Endothelial cell of umbilical vein (primary cell): ENCODE measurements at regions of chr2 and their contacts with region 1.

Region 1: DNA sequence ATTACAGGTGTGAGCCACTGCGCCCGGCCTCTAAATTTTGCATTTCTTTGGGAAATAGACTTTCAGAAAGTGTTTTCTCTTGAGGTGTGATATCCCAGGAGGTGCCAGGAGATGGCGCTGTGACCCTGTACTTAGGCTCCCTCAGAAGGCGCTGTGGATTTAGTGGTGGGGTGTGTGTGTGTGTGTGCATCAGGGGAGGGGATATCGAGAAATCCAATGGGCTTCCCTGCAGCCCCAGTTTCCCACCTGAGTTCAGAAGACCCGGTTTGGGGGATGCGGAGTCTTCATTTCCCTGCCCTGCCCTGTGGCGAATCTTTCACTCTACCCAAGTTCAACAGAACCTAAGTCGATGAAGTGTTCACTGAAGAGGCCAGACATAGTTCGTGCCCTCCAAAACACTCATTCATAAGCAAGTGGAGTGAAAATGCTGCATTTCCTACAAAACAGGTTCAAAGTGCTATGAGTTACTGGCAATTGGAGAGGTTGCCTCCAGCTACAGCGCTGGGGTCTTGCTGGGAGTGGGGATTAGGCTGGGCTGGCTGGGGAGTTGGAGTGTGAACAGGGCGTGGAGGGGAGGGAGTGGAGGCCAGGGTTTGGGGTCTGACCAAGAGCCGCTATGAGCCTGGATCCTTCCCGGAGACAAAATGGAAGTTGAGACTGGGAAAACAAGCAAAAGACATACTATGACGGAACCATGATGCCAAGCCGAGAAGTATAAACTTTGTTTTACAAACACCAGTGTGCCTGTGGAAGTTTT is 6.5 kb upstream of the WNT6 start:
- DNase-seq: peak; percentile 55
- H3K4me3 ChIP-seq: no peak overlapping the region
- H3K27ac ChIP-seq: no peak overlapping the region
- H3K4me1 ChIP-seq: no peaks in the 10 kb centered on the region
- H3K27me3 ChIP-seq: peaks cover 46 to 48% of the 10 kb centered on the region in 2 experiments
- CTCF ChIP-seq: peak; percentile 66 to 82
- POLR2A ChIP-seq: no peak

Region 2: GRCh38 chr2:218671654-218672566 is 181.2 kb before region 1 on chr2 and contains the starts of genes RNF25 and STK36:
- CTCF ChIA-PET with region 1: interaction called, 33 read pairs
- POLR2A ChIA-PET with region 1: no interaction called
- dilution Hi-C with region 1: no loop called
- intact Hi-C with region 1: no loop called
- DNase-seq: peak; percentile 82
- H3K4me3 ChIP-seq: peak within 1 kb of the TSS; percentile 54 to 87 (median 82)
- H3K27ac ChIP-seq: peak within 1 kb of the TSS; percentile 79
- H3K4me1 ChIP-seq: peaks cover 16% of the 10 kb centered on the region
- H3K27me3 ChIP-seq: no peaks in the 10 kb centered on the region
- CTCF ChIP-seq: no peak
- POLR2A ChIP-seq: peak; percentile 86
- total RNA-seq, gene RNF25: 38.2 and 39.1 TPM in 2 replicates
- total RNA-seq, gene STK36: 34.9 and 40.9 TPM in 2 replicates

Region 3: GRCh38 chr2:218701806-218702205 is 151.3 kb before region 1 on chr2:
- CTCF ChIA-PET with region 1: interaction called, 16 read pairs
- POLR2A ChIA-PET with region 1: no interaction called
- dilution Hi-C with region 1: no loop called
- intact Hi-C with region 1: no loop called
- DNase-seq: no peak
- H3K4me3 ChIP-seq: no peak overlapping the region
- H3K27ac ChIP-seq: no peak overlapping the region
- H3K4me1 ChIP-seq: no peaks in the 10 kb centered on the region
- H3K27me3 ChIP-seq: no peaks in the 10 kb centered on the region
- CTCF ChIP-seq: no peak
- POLR2A ChIP-seq: no peak

Region 4: GRCh38 chr2:218733171-218734021 is 119.7 kb before region 1 on chr2:
- CTCF ChIA-PET with region 1: interaction called, 105 read pairs
- POLR2A ChIA-PET with region 1: no interaction called
- dilution Hi-C with region 1: no loop called
- intact Hi-C with region 1: no loop called
- DNase-seq: no peak
- H3K4me3 ChIP-seq: no peak overlapping the region
- H3K27ac ChIP-seq: no peak overlapping the region
- H3K4me1 ChIP-seq: peaks cover 16% of the 10 kb centered on the region
- H3K27me3 ChIP-seq: no peaks in the 10 kb centered on the region
- CTCF ChIP-seq: no peak
- POLR2A ChIP-seq: no peak

Region 5: DNA sequence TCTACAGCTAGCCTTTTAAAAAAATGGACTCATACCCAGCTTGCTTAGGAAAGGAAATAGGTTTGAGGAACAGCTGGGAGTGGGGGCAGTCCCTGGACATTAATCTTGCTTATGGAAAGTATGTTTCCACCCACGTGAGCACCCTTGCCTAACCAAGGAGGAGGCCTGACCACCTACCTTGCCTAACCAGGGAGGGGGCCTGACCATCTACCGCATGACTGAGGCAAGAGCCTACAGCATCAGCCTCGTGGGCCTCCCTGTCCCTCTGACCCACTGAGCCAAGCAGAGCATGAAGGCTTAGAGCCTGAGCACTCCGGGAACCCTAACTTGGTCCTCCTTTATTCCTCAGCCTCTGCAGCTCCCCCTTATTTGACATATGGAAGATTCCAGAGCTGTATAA is 41.7 kb before region 1 on chr2:
- CTCF ChIA-PET with region 1: interaction called, 20 read pairs
- POLR2A ChIA-PET with region 1: no interaction called
- dilution Hi-C with region 1: no loop called
- intact Hi-C with region 1: no loop called
- DNase-seq: no peak
- H3K4me3 ChIP-seq: no peak overlapping the region
- H3K27ac ChIP-seq: no peak overlapping the region
- H3K4me1 ChIP-seq: no peaks in the 10 kb centered on the region
- H3K27me3 ChIP-seq: peaks cover 0 to 2% of the 10 kb centered on the region in 2 experiments
- CTCF ChIP-seq: no peak
- POLR2A ChIP-seq: no peak

Region 6: DNA sequence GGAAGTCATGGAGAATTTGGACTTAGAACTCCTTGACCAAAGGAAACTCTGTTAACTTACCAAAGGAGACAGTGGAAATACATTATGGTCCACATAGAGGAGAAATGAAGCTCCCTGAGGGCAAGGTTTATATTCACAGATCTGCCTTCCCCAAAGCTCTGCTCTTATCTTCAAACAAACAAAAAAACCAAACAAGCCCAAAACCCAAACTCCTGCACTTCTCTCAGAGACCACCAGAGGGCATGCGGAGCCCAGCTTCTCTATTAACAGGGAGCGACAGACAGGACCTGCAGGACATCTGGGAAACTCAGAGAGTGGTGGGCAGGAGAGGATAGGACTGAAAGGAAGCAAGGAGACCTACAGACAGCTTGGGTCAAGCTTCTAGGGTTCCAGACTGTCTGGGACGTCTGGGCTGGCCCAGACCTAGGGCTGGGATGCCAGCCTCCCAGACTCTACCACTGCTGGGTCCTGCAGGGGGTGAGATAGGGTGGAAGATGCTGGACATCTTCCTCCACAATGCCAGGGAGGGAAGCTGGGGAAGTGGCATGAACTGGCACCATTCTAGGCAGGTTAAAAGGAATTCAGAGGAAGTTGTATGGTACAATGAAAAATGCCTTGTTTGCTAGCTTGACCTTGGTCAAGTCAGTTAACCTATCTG is 23.6 kb after region 1 on chr2:
- CTCF ChIA-PET with region 1: interaction called, 27 read pairs
- POLR2A ChIA-PET with region 1: no interaction called
- dilution Hi-C with region 1: no loop called
- intact Hi-C with region 1: loop called (anchors 2 kb)
- DNase-seq: peak; percentile 74
- H3K4me3 ChIP-seq: no peak overlapping the region
- H3K27ac ChIP-seq: no peak overlapping the region
- H3K4me1 ChIP-seq: no peaks in the 10 kb centered on the region
- H3K27me3 ChIP-seq: peaks cover 76 to 86% of the 10 kb centered on the region in 2 experiments
- CTCF ChIP-seq: peak; percentile 89 to 90
- POLR2A ChIP-seq: no peak

Region 7: GRCh38 chr2:219155054-219155644 is 302.1 kb after region 1 on chr2:
- CTCF ChIA-PET with region 1: interaction called, 14 read pairs
- POLR2A ChIA-PET with region 1: no interaction called
- dilution Hi-C with region 1: no loop called
- intact Hi-C with region 1: loop called (anchors 5 kb)
- DNase-seq: peak; percentile 61
- H3K4me3 ChIP-seq: no peak overlapping the region
- H3K27ac ChIP-seq: no peak overlapping the region
- H3K4me1 ChIP-seq: peaks cover 6% of the 10 kb centered on the region
- H3K27me3 ChIP-seq: no peaks in the 10 kb centered on the region
- CTCF ChIP-seq: peak; percentile 28 to 36
- POLR2A ChIP-seq: no peak